ENCODE measurements at regions of chr2 and their contacts with region 1.

Region 1: GRCh38 chr2:174985630-174986029 is 19.6 kb downstream of the CHN1 start:
- DNase-seq: no peak
- H3K4me3 ChIP-seq: no peak overlapping the region
- H3K27ac ChIP-seq: no peak overlapping the region
- H3K4me1 ChIP-seq: no peaks in the 10 kb centered on the region
- H3K27me3 ChIP-seq: no peaks in the 10 kb centered on the region
- CTCF ChIP-seq: peak; percentile 38 to 55

Region 2: GRCh38 chr2:174748948-174749347 is 236.7 kb before region 1 on chr2:
- CTCF ChIA-PET with region 1: interaction called, 5 read pairs
- dilution Hi-C with region 1: no loop called
- in situ Hi-C with region 1: no loop called
- intact Hi-C with region 1: loop called (anchors 1 kb)
- DNase-seq: peak; percentile 61
- H3K4me3 ChIP-seq: no peak overlapping the region
- H3K27ac ChIP-seq: no peak overlapping the region
- H3K4me1 ChIP-seq: no peaks in the 10 kb centered on the region
- H3K27me3 ChIP-seq: no peaks in the 10 kb centered on the region
- CTCF ChIP-seq: peak; percentile 75 to 80

Region 3: GRCh38 chr2:174945601-174946260 is 39.9 kb before region 1 on chr2:
- CTCF ChIA-PET with region 1: no interaction called
- dilution Hi-C with region 1: no loop called
- in situ Hi-C with region 1: no loop called
- intact Hi-C with region 1: no loop called
- DNase-seq: no peak
- H3K4me3 ChIP-seq: no peak overlapping the region
- H3K27ac ChIP-seq: no peak overlapping the region
- H3K4me1 ChIP-seq: no peaks in the 10 kb centered on the region
- H3K27me3 ChIP-seq: no peaks in the 10 kb centered on the region
- CTCF ChIP-seq: no peak